ENCODE measurements at regions of chr1 and their contacts with region 1.

Region 1: GRCh38 chr1:208219659-208220282 is 24.4 kb downstream of the PLXNA2 start:
- DNase-seq: no peak
- H3K4me3 ChIP-seq: no peak overlapping the region
- H3K27ac ChIP-seq: peak overlapping the region; percentile 42 to 59 (median 50)
- H3K4me1 ChIP-seq: peaks cover 0 to 24% (median 9%) of the 10 kb centered on the region in 4 donors
- H3K27me3 ChIP-seq: no peaks in the 10 kb centered on the region
- CTCF ChIP-seq: no peak
- EP300 ChIP-seq: no peak
- POLR2A ChIP-seq: no peak

Region 2: DNA sequence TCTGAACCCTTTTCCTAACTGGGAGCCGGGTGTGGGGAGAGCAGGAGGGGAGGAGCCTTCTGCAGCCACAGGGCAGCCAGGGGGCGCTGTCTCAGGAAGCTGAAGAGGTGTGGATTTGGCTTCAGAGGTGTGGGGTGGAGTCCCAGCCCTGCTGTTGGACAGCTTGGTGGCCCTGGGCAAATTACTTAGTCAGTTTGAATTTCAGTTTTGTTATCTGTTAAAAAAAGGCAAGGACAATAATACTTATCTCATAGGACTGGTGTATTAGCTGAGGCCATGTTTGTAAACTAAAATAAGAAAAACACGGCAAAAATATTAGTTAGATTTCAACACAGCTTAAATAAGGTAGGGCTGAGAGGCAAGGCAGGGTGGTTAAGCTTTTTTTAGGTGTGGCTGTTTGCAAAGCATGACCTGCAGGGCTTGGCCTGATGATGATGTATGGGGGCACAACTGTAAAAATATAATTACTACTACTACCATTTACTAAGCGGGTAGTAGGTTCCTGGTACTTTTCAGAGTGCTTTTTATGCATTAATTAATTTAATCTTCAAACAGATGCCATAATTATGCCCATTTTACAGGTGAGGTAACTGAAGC is 87.4 kb before region 1 on chr1:
- in situ Hi-C with region 1: loop called in 1 of 4 experiments (anchors 10 kb)
- intact Hi-C with region 1: no loop called
- DNase-seq: peak; percentile 94
- H3K4me3 ChIP-seq: no peak overlapping the region
- H3K27ac ChIP-seq: peak overlapping the region; percentile 53 to 69 (median 62)
- H3K4me1 ChIP-seq: peaks cover 4 to 30% (median 15%) of the 10 kb centered on the region in 4 donors
- H3K27me3 ChIP-seq: no peaks in the 10 kb centered on the region
- CTCF ChIP-seq: peak; percentile 74 to 95 (median 84)
- EP300 ChIP-seq: no peak
- POLR2A ChIP-seq: no peak

Region 3: GRCh38 chr1:208184088-208184911 is 35.5 kb before region 1 on chr1:
- in situ Hi-C with region 1: no loop called
- intact Hi-C with region 1: loop called (anchors 1 kb)
- DNase-seq: peak; percentile 78
- H3K4me3 ChIP-seq: no peak overlapping the region
- H3K27ac ChIP-seq: peak overlapping the region; percentile 74 to 86 (median 80)
- H3K4me1 ChIP-seq: peaks cover 41 to 73% (median 50%) of the 10 kb centered on the region in 4 donors
- H3K27me3 ChIP-seq: no peaks in the 10 kb centered on the region
- CTCF ChIP-seq: no peak
- EP300 ChIP-seq: no peak
- POLR2A ChIP-seq: no peak

Region 4: DNA sequence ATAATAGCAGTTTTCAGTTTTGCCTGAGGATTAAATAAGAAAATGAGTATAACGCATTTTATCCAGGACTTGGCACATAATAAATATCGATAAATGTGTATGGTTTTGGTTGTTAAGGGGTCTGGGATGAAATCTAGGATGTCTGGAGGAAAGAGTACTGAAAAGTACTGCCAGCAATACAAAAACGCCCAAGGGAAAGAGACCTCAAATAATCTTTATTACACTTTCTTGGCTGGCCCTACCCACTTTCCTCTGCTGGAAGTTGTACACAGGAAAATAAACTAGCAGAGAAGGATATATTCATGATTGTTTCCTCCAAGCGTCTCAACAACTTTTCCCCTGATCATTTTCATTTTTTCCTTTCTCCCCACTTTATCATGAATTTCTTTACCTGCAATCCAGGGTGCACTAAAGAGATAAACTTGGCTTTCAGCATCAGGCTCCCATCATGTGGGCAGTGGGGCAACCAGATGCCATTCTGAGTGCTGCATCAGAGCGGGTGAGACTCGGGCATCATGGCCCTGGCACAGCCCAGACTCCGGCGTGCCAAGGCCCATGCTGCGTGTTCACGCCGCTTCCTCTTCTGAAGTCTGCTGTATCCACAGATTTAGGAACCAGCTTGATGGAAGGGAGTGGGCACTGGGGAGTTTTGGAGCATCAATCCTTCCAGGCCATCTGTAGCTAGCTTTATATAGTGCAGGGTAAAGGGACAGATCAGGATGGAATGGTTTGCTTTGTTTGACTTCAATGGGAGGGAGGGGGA is 60.2 kb after region 1 on chr1:
- in situ Hi-C with region 1: no loop called
- intact Hi-C with region 1: no loop called
- DNase-seq: no peak
- H3K4me3 ChIP-seq: no peak overlapping the region
- H3K27ac ChIP-seq: no peak overlapping the region
- H3K4me1 ChIP-seq: no peaks in the 10 kb centered on the region
- H3K27me3 ChIP-seq: peaks cover 11% of the 10 kb centered on the region
- CTCF ChIP-seq: no peak
- EP300 ChIP-seq: no peak
- POLR2A ChIP-seq: no peak

Measured in transverse colon (tissue), 4 donors.